Right cardiac atrium (tissue), 5 donors: ENCODE measurements at regions of chr20 and their contacts with region 1.

Region 1: GRCh38 chr20:14445310-14445709 is 107.9 kb upstream of the FLRT3 start:
- DNase-seq: no peak
- ATAC-seq: no peak
- H3K4me3 ChIP-seq: no peak overlapping the region
- H3K27ac ChIP-seq: no peak overlapping the region
- H3K4me1 ChIP-seq: no peaks in the 10 kb centered on the region
- H3K27me3 ChIP-seq: no peaks in the 10 kb centered on the region

Region 2: GRCh38 chr20:14384416-14385175 is 60.7 kb before region 1 on chr20:
- intact Hi-C with region 1: loop called in 1 of 4 experiments (anchors 10 kb)
- DNase-seq: no peak
- ATAC-seq: no peak
- H3K4me3 ChIP-seq: no peak overlapping the region
- H3K27ac ChIP-seq: no peak overlapping the region
- H3K4me1 ChIP-seq: no peaks in the 10 kb centered on the region
- H3K27me3 ChIP-seq: no peaks in the 10 kb centered on the region

Region 3: GRCh38 chr20:14544688-14545087 is 99.4 kb after region 1 on chr20:
- intact Hi-C with region 1: no loop called
- DNase-seq: no peak
- ATAC-seq: peak in 1 of 2 donors; percentile 38
- H3K4me3 ChIP-seq: no peak overlapping the region
- H3K27ac ChIP-seq: no peak overlapping the region
- H3K4me1 ChIP-seq: no peaks in the 10 kb centered on the region
- H3K27me3 ChIP-seq: no peaks in the 10 kb centered on the region